Ovary (tissue), 10 donors: ENCODE measurements at regions of chr22 and their contacts with region 1.

Region 1: GRCh38 chr22:37862570-37863325 is 13.5 kb downstream of the EIF3L start:
- DNase-seq: no peak
- H3K4me3 ChIP-seq: no peak overlapping the region
- H3K27ac ChIP-seq: peak overlapping the region in 1 of 2 donors; percentile 23
- H3K4me1 ChIP-seq: peaks cover 3% of the 10 kb centered on the region
- H3K27me3 ChIP-seq: no peaks in the 10 kb centered on the region
- CTCF ChIP-seq: no peak
- EP300 ChIP-seq: no peak
- POLR2A ChIP-seq: no peak

Region 2: DNA sequence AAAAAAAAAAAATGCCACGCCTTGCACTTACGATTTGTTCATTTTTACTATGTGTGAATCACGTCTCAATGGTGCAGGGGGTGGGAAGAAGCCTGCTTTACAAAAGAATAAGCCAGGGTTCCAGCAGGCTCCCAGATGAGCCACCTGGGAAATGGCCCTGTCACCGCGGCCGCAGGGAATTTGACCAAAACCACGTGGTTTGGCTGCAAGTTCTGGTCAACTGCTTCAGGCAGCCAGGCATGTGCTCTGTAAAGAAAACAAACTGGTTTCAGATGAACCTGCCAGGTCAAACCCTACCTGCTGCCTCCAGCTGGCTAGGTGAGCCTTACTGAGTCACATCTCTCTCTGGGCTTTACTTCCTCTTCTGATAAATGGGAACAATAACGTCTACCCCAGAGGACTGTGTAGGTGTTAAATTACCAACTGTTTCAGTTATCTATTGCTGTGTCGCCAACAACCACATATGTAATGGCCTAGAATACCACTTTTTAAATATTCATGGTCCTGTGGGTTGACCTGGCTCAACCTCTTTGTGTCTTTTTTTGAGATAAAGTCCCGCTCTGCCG is 85.5 kb before region 1 on chr22:
- intact Hi-C with region 1: no loop called
- DNase-seq: peak in 2 of 5 donors; percentile 56 to 58
- H3K4me3 ChIP-seq: no peak overlapping the region
- H3K27ac ChIP-seq: peak overlapping the region in 1 of 2 donors; percentile 46
- H3K4me1 ChIP-seq: peaks cover 10% of the 10 kb centered on the region
- H3K27me3 ChIP-seq: no peaks in the 10 kb centered on the region
- CTCF ChIP-seq: no peak
- EP300 ChIP-seq: no peak
- POLR2A ChIP-seq: no peak

Region 3: DNA sequence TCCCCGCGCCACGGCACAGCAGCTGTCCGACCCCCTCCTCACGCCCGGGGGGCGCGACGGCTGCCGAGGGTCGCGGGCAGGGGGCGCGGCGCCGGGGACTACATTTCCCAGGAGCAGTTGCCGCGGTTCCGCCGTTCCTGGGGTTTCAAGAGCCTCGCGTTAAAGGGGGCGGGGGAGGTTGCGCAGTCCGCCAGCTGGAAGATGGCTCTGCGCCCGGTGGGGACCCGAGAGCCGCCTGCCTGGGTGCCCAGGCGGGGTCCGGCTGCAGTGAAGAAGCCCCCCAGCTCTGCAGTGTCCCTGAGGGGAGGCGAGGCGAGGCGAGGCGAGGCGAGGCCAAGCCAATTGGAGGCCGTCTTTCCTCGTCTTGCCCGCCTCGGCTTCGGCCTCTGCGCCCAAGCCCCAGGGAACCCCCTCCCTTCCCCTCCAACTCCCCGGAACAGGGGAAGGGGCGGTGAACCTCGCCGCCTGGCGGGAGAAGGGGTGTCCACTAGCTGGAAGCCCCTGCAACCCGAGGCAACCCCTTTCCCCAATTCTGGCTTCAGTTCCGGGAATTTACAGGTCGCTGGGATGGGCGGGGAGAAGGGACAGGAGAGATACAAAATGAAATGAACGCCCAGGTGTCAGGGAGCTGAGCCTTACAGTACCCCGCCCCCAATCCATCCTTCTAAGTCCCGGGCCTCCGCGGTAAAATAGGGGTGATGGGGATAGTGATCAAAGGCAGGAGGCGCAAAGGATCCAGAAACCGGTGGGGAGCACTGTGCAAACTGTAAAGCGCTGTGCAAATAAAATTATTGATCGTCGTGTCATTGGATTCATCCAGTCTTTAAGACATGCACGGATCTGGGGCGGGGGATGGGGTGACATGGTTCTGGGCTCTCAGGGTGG is 60.2 kb before region 1 on chr22:
- intact Hi-C with region 1: no loop called
- DNase-seq: peak; percentile 56 to 81 (median 73)
- H3K4me3 ChIP-seq: peak overlapping the region; percentile 43
- H3K27ac ChIP-seq: no peak overlapping the region
- H3K4me1 ChIP-seq: peaks cover 6% of the 10 kb centered on the region
- H3K27me3 ChIP-seq: no peaks in the 10 kb centered on the region
- CTCF ChIP-seq: no peak
- EP300 ChIP-seq: no peak
- POLR2A ChIP-seq: no peak

Region 4: GRCh38 chr22:37824674-37825641 is 37.8 kb before region 1 on chr22:
- intact Hi-C with region 1: loop called in 1 of 4 experiments (anchors 5 kb)
- DNase-seq: peak in 3 of 5 donors; percentile 32 to 54 (median 40)
- H3K4me3 ChIP-seq: peak overlapping the region; percentile 17
- H3K27ac ChIP-seq: peak overlapping the region in 1 of 2 donors; percentile 10
- H3K4me1 ChIP-seq: peaks cover 3% of the 10 kb centered on the region
- H3K27me3 ChIP-seq: no peaks in the 10 kb centered on the region
- CTCF ChIP-seq: no peak
- EP300 ChIP-seq: no peak
- POLR2A ChIP-seq: no peak